ENCODE measurements at regions of chr17 and their contacts with region 1.

Region 1: GRCh38 chr17:66310528-66311148 is 8.2 kb downstream of the PRKCA start:
- DNase-seq: peak; percentile 77
- H3K4me3 Mint-ChIP-seq: peak overlapping the region; percentile 25
- H3K27ac Mint-ChIP-seq: peak overlapping the region; percentile 94
- H3K4me1 Mint-ChIP-seq: peaks cover 90% of the 10 kb centered on the region
- H3K27me3 Mint-ChIP-seq: no peaks in the 10 kb centered on the region

Region 2: DNA sequence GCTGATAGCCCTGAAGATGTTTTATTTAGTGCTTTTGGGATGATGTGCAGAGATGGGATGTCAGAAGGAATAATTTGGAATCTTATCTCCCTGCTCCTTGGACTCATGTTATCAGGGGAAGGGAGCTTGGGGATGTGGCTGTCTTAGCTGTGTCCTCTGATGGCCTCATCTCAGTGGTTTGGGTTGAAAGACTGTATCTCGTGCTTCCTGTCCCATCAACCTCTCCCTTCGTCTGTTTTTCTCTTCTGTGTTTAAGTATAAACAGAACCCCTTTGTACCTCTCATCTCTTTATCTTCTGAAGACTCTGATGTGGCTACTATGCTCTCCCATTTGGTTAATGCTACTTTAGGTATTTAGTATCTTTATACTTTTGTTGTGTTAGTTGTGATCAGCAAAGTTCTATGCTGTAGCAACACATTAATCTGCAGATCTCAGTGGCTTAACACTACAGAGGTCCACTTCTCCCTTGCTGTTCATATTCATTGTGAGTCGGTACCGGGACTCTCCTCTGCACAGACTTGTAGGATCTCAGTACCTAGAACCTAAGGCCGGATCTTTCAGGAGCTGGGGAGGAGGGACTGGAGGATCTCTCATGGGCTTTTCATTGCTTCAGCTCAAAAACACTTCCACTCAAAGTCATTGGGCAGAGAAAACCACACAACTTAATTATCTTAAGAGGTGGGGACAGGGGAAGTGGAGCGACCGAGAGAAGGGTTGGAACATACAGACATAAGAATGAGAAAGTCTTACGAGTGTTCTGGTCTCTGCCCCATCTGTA is 20.6 kb after region 1 on chr17:
- CTCF ChIA-PET with region 1: interaction called, 48 read pairs
- intact Hi-C with region 1: loop called (anchors 1 kb)
- DNase-seq: peak; percentile 49
- H3K4me3 Mint-ChIP-seq: peak overlapping the region; percentile 73
- H3K27ac Mint-ChIP-seq: peak overlapping the region; percentile 94
- H3K4me1 Mint-ChIP-seq: peaks cover 76% of the 10 kb centered on the region
- H3K27me3 Mint-ChIP-seq: no peaks in the 10 kb centered on the region

Region 3: DNA sequence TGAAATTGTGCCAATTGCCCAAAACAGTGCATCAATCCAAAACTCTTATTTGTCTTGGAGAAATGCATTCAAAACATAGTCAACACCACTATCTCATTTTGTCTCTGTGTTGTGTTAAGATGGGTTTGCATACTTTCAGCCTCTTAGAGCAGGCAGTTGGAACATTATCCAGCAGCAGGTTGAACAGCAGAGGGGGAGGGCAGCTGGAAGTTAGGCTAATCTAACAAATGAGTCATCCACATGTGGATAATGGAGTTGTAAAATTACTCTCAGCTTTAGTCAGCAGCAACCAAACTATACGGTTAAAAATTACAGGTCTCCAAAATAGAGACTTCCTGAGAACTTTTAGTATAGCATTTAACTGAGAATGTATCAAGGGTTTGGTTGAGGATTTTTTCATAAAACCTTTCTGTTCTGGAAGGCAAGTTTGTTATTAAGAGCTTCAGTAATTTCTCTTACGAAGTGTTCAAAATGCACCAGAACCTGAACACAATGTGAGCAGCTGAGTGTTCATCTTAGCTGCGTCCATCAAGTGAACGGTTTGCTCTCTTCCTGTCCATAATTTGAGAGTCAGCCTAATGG is 38.0 kb after region 1 on chr17:
- CTCF ChIA-PET with region 1: no interaction called
- intact Hi-C with region 1: loop called (anchors 1 kb)
- DNase-seq: peak; percentile 62
- H3K4me3 Mint-ChIP-seq: no peak overlapping the region
- H3K27ac Mint-ChIP-seq: peak overlapping the region; percentile 47
- H3K4me1 Mint-ChIP-seq: peaks cover 73% of the 10 kb centered on the region
- H3K27me3 Mint-ChIP-seq: no peaks in the 10 kb centered on the region

Region 4: GRCh38 chr17:66397486-66397885 is 86.8 kb after region 1 on chr17:
- CTCF ChIA-PET with region 1: interaction called, 3 read pairs
- intact Hi-C with region 1: loop called (anchors 1 kb)
- DNase-seq: peak; percentile 59
- H3K4me3 Mint-ChIP-seq: no peak overlapping the region
- H3K27ac Mint-ChIP-seq: peak overlapping the region; percentile 55
- H3K4me1 Mint-ChIP-seq: peaks cover 81% of the 10 kb centered on the region
- H3K27me3 Mint-ChIP-seq: no peaks in the 10 kb centered on the region

Region 5: DNA sequence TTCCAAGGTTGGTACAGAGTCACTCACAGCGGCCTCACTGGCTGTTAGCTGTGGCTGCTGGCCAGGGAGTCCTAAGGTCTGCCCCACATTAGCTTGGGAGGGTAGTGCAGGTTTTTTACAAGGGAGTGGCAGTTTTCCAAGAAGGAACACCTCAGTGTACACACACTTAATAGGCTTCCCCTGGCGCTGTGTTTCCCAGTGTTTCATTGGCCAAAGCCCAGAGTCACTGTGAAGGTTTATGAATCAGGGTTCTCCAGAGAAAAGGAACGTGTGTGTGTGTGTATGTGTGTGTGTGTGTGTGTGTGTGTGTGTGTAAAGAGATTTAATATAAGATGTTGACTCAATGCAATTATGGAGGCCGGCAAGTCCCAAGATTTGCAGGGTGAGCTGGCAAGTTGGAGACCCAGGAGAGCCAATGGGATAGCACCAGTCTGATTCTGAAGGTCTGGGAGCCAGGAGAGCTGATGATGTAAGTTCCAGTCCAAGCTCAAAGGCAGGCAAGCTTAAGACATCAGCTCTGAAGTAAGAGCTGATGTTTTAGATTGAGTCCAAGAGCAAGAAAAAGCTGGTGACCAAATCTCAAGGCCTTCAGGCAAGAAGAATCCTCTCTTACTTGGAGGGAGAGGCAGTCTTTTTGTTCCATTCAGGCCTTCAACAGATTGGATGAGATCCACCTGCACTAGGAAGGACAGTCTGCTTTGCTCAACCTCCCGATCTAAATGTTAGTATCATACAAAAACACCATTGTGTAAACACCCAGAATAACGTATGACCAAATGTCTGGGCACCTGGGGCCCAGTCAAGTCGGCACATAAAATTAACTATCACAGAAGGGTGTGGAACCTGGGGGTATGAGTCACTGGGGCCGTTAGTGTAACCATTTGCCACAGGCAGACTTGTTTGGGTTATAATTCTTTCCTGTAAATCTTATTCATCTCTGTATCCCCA is 198.5 kb after region 1 on chr17:
- CTCF ChIA-PET with region 1: no interaction called
- intact Hi-C with region 1: loop called (anchors 2 kb)
- DNase-seq: peak; percentile 79
- H3K4me3 Mint-ChIP-seq: peak overlapping the region; percentile 39
- H3K27ac Mint-ChIP-seq: peak overlapping the region; percentile 90
- H3K4me1 Mint-ChIP-seq: peaks cover 85% of the 10 kb centered on the region
- H3K27me3 Mint-ChIP-seq: no peaks in the 10 kb centered on the region

Region 6: GRCh38 chr17:66547117-66547865 is 236.7 kb after region 1 on chr17:
- CTCF ChIA-PET with region 1: no interaction called
- intact Hi-C with region 1: loop called (anchors 2 kb)
- DNase-seq: no peak
- H3K4me3 Mint-ChIP-seq: no peak overlapping the region
- H3K27ac Mint-ChIP-seq: peak overlapping the region; percentile 46
- H3K4me1 Mint-ChIP-seq: peaks cover 53% of the 10 kb centered on the region
- H3K27me3 Mint-ChIP-seq: no peaks in the 10 kb centered on the region

Region 7: DNA sequence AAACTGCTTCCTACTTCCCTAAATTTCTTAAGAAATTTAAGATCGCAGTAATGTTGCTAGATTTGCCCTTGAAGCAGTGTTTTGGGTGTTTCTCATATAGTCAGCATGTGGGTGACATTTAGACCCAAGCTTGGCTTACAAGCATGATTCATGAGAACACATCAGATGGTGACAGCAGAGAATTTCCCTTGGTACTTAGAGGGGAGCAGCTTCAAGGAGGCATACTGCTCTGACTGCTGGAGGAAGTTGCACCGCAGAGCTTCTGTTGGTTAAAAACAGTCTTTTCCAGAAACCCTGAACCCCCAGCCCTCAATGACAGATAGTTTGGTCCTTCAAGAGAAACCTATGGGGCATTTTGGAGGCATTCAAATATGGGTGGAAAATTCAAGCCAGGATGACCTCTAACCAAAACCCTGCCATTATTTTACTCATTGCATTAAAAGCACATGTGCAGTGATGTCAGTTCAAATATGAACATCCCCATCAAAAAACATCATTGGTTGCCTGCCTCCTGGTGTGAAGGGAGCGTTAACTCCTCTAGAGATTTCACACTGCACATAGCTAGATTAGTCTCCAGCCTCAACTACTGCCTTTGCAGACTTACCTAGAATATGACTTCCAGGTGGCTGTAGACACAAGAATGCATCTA is 322.8 kb after region 1 on chr17:
- CTCF ChIA-PET with region 1: no interaction called
- intact Hi-C with region 1: loop called (anchors 1 kb)
- DNase-seq: peak; percentile 78
- H3K4me3 Mint-ChIP-seq: no peak overlapping the region
- H3K27ac Mint-ChIP-seq: peak overlapping the region; percentile 44
- H3K4me1 Mint-ChIP-seq: peaks cover 62% of the 10 kb centered on the region
- H3K27me3 Mint-ChIP-seq: no peaks in the 10 kb centered on the region

Measured in activated naive CD4-positive, alpha-beta T cell treated with anti-CD3 and anti-CD28 coated beads for 36 hours (primary cell).